ENCODE measurements at regions of chr2 and their contacts with region 1.

Region 1: GRCh38 chr2:64144057-64145013 is at the start of gene PELI1:
- DNase-seq: peak; percentile 95 to 100 (median 99)

Region 2: GRCh38 chr2:64052468-64053241 is 91.7 kb before region 1 on chr2:
- intact Hi-C with region 1: loop called (anchors 10 kb)
- DNase-seq: peak in 4 of 42 donors; percentile 15 to 46 (median 26)

Region 3: DNA sequence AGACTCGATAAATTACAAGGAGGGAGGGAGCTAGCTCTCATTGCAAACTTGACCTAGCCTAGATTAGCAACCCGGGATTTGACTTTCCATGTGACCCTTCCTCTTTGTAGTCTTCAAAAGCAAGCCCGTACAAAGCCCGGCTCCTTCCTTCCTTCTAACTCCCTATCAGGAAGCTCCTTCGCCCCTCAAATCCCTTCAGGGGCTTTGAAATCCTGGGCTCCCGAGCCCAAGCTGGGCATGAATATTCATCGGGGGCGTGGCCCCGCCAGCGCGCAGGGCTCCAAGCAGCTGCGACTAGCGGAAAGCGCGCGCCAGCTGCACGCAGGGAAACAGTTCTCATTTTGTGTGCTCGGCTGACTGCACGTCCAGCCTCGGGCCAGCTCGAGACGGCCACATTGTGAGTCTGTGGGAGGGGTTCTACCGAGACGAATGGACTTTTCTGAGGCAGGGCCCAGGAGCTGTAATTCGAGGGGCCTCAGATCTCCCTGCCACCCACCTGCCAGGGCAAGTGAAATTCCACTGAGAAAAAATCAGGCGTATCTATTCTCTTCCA is 83.9 kb after region 1 on chr2:
- intact Hi-C with region 1: loop called (anchors 5 kb)
- DNase-seq: peak; percentile 86 to 97 (median 93)

Region 4: GRCh38 chr2:64283641-64284361 is 139.5 kb after region 1 on chr2:
- intact Hi-C with region 1: no loop called
- DNase-seq: no peak